ENCODE measurements at regions of chr3 and their contacts with region 1.

Region 1: GRCh38 chr3:125001557-125002413 is 54.0 kb downstream of the HEG1 start:
- DNase-seq: no peak
- H3K4me3 ChIP-seq: no peak overlapping the region
- H3K27ac ChIP-seq: no peak overlapping the region
- H3K4me1 ChIP-seq: peaks cover 10% of the 10 kb centered on the region
- H3K27me3 ChIP-seq: no peaks in the 10 kb centered on the region
- CTCF ChIP-seq: no peak
- POLR2A ChIP-seq: no peak

Region 2: GRCh38 chr3:124741027-124741426 is 260.8 kb before region 1 on chr3:
- CTCF ChIA-PET with region 1: no interaction called
- POLR2A ChIA-PET with region 1: no interaction called
- dilution Hi-C with region 1: no loop called
- intact Hi-C with region 1: no loop called
- DNase-seq: no peak
- H3K4me3 ChIP-seq: no peak overlapping the region
- H3K27ac ChIP-seq: no peak overlapping the region
- H3K4me1 ChIP-seq: no peaks in the 10 kb centered on the region
- H3K27me3 ChIP-seq: no peaks in the 10 kb centered on the region
- CTCF ChIP-seq: no peak
- POLR2A ChIP-seq: no peak

Region 3: DNA sequence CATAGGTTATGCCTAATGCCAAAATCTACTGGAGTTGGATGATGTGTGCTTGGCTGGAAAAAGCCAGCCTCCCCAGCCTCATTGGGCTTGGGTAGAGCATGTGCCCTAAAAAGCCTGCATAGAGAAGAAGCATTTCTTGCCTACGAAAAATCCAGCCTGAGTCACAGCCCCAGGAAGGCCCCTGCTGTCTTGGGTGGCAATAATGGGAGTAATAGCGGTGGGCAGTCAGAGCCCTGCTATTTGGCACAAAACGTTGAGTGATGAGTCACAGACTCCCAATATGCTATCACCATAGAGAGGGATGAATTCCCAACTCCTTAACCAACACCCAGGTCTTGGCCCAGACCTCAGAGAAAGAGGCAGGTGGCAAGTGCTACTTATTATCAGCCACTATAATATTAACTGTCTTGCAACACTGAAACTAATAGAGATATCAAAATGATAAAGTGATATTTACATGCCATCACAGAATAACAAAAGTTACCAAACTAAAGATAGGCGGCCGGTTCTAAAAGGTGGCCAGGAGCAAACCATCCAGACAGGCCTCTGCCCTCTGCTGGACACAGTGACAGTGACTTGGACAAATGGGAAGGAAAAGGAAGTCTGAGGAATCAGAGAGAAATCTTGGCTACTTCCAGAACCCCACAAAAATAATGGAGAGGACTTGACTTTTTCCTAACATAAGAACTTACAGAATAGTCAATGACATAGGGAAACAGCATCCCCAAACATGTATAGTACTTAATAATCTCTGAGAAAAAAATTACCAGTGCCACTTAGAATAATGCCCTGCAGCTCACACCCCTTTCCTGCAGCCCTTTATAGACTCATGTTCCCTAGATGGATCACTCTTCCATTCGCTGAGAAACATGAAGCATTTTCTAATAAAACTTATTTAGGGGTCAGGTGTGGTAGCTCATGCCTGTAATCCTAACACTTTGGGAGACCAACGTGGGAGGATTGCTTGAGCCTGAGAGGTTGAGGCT is 15.3 kb before region 1 on chr3:
- CTCF ChIA-PET with region 1: no interaction called
- POLR2A ChIA-PET with region 1: no interaction called
- dilution Hi-C with region 1: no loop called
- intact Hi-C with region 1: loop called (anchors 1 kb)
- DNase-seq: peak; percentile 52
- H3K4me3 ChIP-seq: no peak overlapping the region
- H3K27ac ChIP-seq: peak overlapping the region; percentile 61
- H3K4me1 ChIP-seq: peaks cover 29% of the 10 kb centered on the region
- H3K27me3 ChIP-seq: no peaks in the 10 kb centered on the region
- CTCF ChIP-seq: peak; percentile 36 to 37
- POLR2A ChIP-seq: no peak